ENCODE measurements at regions of chr2 and their contacts with region 1.

Region 1: GRCh38 chr2:113203901-113204519 is 30.2 kb downstream of the PSD4 start:
- DNase-seq: peak in 5 of 6 donors; percentile 55 to 81 (median 76)
- ATAC-seq: peak; percentile 32 to 82 (median 68)
- H3K4me3 ChIP-seq: no peak overlapping the region
- H3K27ac ChIP-seq: peak overlapping the region in 1 of 4 donors; percentile 15
- H3K4me1 ChIP-seq: peaks cover 0 to 13% (median 5%) of the 10 kb centered on the region in 3 donors
- H3K27me3 ChIP-seq: no peaks in the 10 kb centered on the region
- CTCF ChIP-seq: peak; percentile 52 to 77 (median 68)

Region 2: DNA sequence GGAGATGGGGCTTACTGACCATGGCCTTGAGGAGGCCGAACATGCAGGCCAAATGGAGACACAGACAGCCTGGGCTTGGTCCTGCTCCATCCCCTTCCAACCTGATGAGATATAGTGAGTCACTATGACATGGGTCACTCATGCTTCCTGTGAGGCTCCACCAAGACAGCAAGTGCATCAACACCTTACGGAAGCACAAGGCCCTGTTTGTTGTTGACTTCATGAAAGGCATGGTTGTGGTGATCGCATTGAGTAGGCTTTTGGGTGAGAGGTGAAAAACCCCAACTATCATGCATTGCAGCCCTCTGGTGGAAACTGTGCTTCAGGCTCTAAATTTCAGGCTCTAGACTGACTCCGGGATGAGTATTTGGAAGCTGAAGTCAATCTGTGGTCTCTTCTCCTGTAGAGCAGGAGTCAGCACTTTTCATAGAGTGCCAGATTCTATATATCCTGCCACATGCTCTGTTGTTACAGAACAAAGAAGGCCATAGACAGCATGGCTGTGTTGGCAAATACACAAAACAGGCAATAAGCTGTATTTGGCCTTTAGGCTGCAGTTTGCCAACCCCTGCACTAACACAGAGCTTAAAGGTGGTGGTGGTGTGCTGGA is 283.0 kb before region 1 on chr2:
- intact Hi-C with region 1: no loop called
- DNase-seq: no peak
- ATAC-seq: no peak
- H3K4me3 ChIP-seq: no peak overlapping the region
- H3K27ac ChIP-seq: no peak overlapping the region
- H3K4me1 ChIP-seq: no peaks in the 10 kb centered on the region
- H3K27me3 ChIP-seq: no peaks in the 10 kb centered on the region
- CTCF ChIP-seq: no peak

Region 3: GRCh38 chr2:113138428-113139322 is 65.3 kb before region 1 on chr2:
- intact Hi-C with region 1: loop called in 2 of 3 experiments (anchors 5 kb)
- DNase-seq: peak in 4 of 6 donors; percentile 53 to 73 (median 69)
- ATAC-seq: peak; percentile 90 to 95 (median 94)
- H3K4me3 ChIP-seq: no peak overlapping the region
- H3K27ac ChIP-seq: peak overlapping the region in 2 of 4 donors; percentile 49 to 50
- H3K4me1 ChIP-seq: peaks cover 0 to 15% (median 0%) of the 10 kb centered on the region in 3 donors
- H3K27me3 ChIP-seq: no peaks in the 10 kb centered on the region
- CTCF ChIP-seq: peak; percentile 73 to 86 (median 81)

Region 4: DNA sequence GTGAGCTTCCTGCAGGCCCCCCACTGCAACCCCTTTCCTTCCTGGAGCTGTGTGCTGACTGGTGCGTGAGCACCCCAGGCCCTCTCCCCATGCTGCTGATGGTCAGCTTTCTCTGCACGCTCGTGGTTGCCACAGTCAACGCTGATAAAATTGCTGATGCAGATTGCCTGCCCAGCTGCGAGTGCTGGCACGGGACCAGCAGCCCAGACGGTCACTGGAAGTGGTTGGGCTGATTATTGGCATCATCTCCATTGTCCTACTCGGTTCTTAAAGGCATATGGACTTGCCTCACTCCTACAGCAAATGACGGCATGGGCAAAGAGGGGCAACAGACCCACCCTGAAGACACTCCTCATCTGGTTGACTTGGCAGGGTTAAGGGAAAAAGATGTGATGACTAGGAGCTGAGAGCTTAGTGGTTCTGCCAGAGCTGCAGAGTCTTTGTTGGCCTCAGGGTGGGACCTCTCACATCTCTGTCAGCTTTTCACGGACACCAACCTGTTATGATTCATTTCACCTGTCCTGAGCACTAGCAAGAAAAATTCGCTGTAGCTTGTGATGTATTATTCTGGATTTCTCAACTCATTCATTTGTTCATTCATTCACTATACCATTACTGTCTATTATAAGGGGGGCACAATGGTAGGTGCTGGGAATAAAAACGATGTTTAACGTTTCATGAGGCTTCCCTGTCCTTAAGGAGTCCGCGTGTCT is 36.3 kb after region 1 on chr2:
- intact Hi-C with region 1: no loop called
- DNase-seq: peak; percentile 76 to 95 (median 88)
- ATAC-seq: peak; percentile 73 to 91 (median 84)
- H3K4me3 ChIP-seq: no peak overlapping the region
- H3K27ac ChIP-seq: peak overlapping the region in 2 of 4 donors; percentile 20 to 46
- H3K4me1 ChIP-seq: peaks cover 0 to 8% (median 0%) of the 10 kb centered on the region in 3 donors
- H3K27me3 ChIP-seq: no peaks in the 10 kb centered on the region
- CTCF ChIP-seq: no peak